ENCODE measurements at regions of chr4 and their contacts with region 1.

Region 1: GRCh38 chr4:56445699-56446098 is 9.6 kb downstream of the PAICS start:
- DNase-seq: no peak
- ATAC-seq: no peak
- H3K4me3 ChIP-seq: no peak overlapping the region
- H3K27ac ChIP-seq: no peak overlapping the region
- H3K4me1 ChIP-seq: no peaks in the 10 kb centered on the region
- H3K27me3 ChIP-seq: no peaks in the 10 kb centered on the region
- CTCF ChIP-seq: no peak
- POLR2A ChIP-seq: no peak
- RAD21 ChIP-seq: no peak

Region 2: GRCh38 chr4:56460085-56460484 is 14.4 kb after region 1 on chr4:
- CTCF ChIA-PET with region 1: no interaction called
- POLR2A ChIA-PET with region 1: no interaction called
- dilution Hi-C with region 1: no loop called
- in situ Hi-C with region 1: no loop called
- intact Hi-C with region 1: loop called (anchors 2 kb)
- DNase-seq: no peak
- ATAC-seq: no peak
- H3K4me3 ChIP-seq: no peak overlapping the region
- H3K27ac ChIP-seq: peak overlapping the region; percentile 21; the same call in 1 of the 2 replicates
- H3K4me1 ChIP-seq: no peaks in the 10 kb centered on the region
- H3K27me3 ChIP-seq: no peaks in the 10 kb centered on the region
- CTCF ChIP-seq: no peak
- POLR2A ChIP-seq: no peak
- RAD21 ChIP-seq: no peak

Region 3: GRCh38 chr4:56619160-56619559 is 173.5 kb after region 1 on chr4:
- CTCF ChIA-PET with region 1: no interaction called
- POLR2A ChIA-PET with region 1: no interaction called
- dilution Hi-C with region 1: no loop called
- in situ Hi-C with region 1: no loop called
- intact Hi-C with region 1: no loop called
- DNase-seq: peak; percentile 58
- ATAC-seq: peak; percentile 90
- H3K4me3 ChIP-seq: no peak overlapping the region
- H3K27ac ChIP-seq: no peak overlapping the region
- H3K4me1 ChIP-seq: no peaks in the 10 kb centered on the region; the same call in 1 of the 2 replicates
- H3K27me3 ChIP-seq: no peaks in the 10 kb centered on the region
- CTCF ChIP-seq: 0 out of 2 replicates have a peak, but pooled peaks have one; percentile 18
- POLR2A ChIP-seq: no peak
- RAD21 ChIP-seq: no peak

Measured in IMR-90 (cell line).